ENCODE measurements at regions of chr1 and their contacts with region 1.

Region 1: GRCh38 chr1:175373786-175374623 is 181.4 kb upstream of the KIAA0040 start:
- DNase-seq: peak; percentile 16
- ATAC-seq: peak; percentile 97
- H3K4me3 ChIP-seq: no peak overlapping the region
- H3K27ac ChIP-seq: no peak overlapping the region
- H3K4me1 ChIP-seq: no peaks in the 10 kb centered on the region
- H3K27me3 ChIP-seq: no peaks in the 10 kb centered on the region
- CTCF ChIP-seq: peak; percentile 89
- EP300 ChIP-seq: no peak
- POLR2A ChIP-seq: no peak
- RAD21 ChIP-seq: peak; percentile 63

Region 2: DNA sequence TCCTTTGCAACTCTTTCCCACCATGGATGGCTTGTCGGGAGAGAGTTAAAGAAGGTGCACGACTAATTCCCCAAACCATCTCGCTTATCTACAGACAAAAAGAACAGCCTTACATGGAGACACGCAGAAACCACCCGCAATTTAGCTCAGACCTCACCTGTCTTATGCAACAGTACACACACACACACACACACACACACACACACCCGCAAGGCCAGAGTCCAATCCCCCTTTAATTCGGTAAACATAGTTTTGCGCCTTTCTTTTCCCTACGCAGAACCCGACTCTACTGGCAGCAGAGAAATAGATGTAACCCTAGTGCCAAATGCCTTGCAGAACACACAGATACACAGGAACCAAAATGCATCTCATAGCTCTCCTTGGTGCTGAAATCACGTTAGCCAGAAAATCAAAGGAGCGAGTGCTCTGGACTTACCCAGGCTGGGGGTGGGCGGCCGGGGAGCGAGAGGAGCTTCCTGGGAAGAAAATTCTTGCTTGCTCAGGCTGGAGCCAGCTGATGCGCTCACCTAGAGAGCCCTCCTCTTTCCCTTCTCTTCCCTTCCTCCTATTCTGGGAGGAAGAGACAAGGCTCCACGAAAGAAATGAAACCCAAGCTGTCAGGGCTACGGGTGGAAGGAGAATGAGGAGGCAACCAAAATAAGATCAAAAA is 368.9 kb after region 1 on chr1:
- CTCF ChIA-PET with region 1: no interaction called
- POLR2A ChIA-PET with region 1: no interaction called
- in situ Hi-C with region 1: no loop called
- intact Hi-C with region 1: loop called (anchors 10 kb)
- DNase-seq: peak; percentile 26
- ATAC-seq: peak; percentile 84
- H3K4me3 ChIP-seq: no peak overlapping the region
- H3K27ac ChIP-seq: no peak overlapping the region
- H3K4me1 ChIP-seq: peaks cover 10% of the 10 kb centered on the region; the same call in 1 of the 2 replicates
- H3K27me3 ChIP-seq: no peaks in the 10 kb centered on the region; a peak in 1 of 5 replicates
- CTCF ChIP-seq: no peak
- EP300 ChIP-seq: no peak
- POLR2A ChIP-seq: no peak
- RAD21 ChIP-seq: no peak

Region 3: GRCh38 chr1:175887981-175888433 is 514.0 kb after region 1 on chr1:
- CTCF ChIA-PET with region 1: no interaction called
- POLR2A ChIA-PET with region 1: no interaction called
- in situ Hi-C with region 1: no loop called
- intact Hi-C with region 1: loop called (anchors 5 kb)
- DNase-seq: peak; percentile 45
- ATAC-seq: peak; percentile 99
- H3K4me3 ChIP-seq: no peak overlapping the region
- H3K27ac ChIP-seq: no peak overlapping the region
- H3K4me1 ChIP-seq: no peaks in the 10 kb centered on the region
- H3K27me3 ChIP-seq: peaks cover 2 to 4% of the 10 kb centered on the region in 2 experiments; a peak in 1 of 5 replicates
- CTCF ChIP-seq: peak; percentile 85
- EP300 ChIP-seq: no peak
- POLR2A ChIP-seq: no peak
- RAD21 ChIP-seq: peak; percentile 68

Region 4: GRCh38 chr1:176073524-176074157 is 699.6 kb after region 1 on chr1:
- CTCF ChIA-PET with region 1: interaction called, 4 read pairs
- POLR2A ChIA-PET with region 1: no interaction called
- in situ Hi-C with region 1: loop called (anchors 25 kb)
- intact Hi-C with region 1: loop called (anchors 2 kb)
- DNase-seq: peak; percentile 57
- ATAC-seq: peak; percentile 80
- H3K4me3 ChIP-seq: no peak overlapping the region
- H3K27ac ChIP-seq: no peak overlapping the region
- H3K4me1 ChIP-seq: no peaks in the 10 kb centered on the region
- H3K27me3 ChIP-seq: no peaks in the 10 kb centered on the region
- CTCF ChIP-seq: peak; percentile 81
- EP300 ChIP-seq: no peak
- POLR2A ChIP-seq: no peak
- RAD21 ChIP-seq: peak; percentile 16; the same call in 1 of the 2 replicates

Region 5: DNA sequence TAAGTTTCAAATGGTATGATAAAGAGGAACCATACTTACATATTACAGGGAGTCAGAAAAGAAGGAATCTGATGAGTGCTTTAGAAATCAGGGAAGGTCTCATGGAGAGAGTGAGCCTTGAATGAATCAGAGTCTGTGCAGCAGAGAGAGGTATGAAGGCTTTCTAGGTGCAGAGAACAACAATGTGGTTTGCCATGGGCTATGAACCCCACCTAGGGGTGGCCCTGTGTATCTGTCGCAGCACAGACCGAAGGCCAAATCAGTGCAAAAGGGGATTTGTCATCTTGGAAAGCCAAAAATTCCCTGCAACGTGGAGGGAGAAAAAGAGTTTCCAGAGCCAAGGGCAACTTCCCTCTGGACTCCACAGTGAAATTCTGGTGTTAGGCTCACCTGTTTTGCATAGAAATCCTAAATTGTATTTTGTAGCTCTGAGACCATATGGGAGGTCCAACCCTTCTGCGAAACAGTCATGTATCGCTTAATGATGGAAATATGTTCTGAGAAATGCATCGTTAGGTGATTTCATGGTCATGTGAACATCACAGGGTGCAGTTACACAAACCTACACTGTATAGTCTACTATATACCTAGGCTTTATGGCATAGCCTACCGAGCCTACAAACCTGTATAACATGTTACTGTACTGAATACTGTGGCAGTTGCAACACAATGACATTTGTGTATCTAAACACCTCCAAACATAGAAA is 1092.7 kb after region 1 on chr1:
- CTCF ChIA-PET with region 1: no interaction called
- POLR2A ChIA-PET with region 1: no interaction called
- in situ Hi-C with region 1: loop called (anchors 25 kb)
- intact Hi-C with region 1: loop called (anchors 5 kb)
- DNase-seq: peak; percentile 19
- ATAC-seq: peak; percentile 98
- H3K4me3 ChIP-seq: no peak overlapping the region
- H3K27ac ChIP-seq: no peak overlapping the region
- H3K4me1 ChIP-seq: peaks cover 9% of the 10 kb centered on the region
- H3K27me3 ChIP-seq: no peaks in the 10 kb centered on the region
- CTCF ChIP-seq: peak; percentile 70
- EP300 ChIP-seq: no peak
- POLR2A ChIP-seq: no peak
- RAD21 ChIP-seq: no peak

Region 6: GRCh38 chr1:176691251-176692228 is 1317.5 kb after region 1 on chr1:
- CTCF ChIA-PET with region 1: no interaction called
- POLR2A ChIA-PET with region 1: no interaction called
- in situ Hi-C with region 1: no loop called
- intact Hi-C with region 1: loop called (anchors 5 kb)
- DNase-seq: peak; percentile 52
- ATAC-seq: peak; percentile 88
- H3K4me3 ChIP-seq: no peak overlapping the region
- H3K27ac ChIP-seq: no peak overlapping the region
- H3K4me1 ChIP-seq: no peaks in the 10 kb centered on the region
- H3K27me3 ChIP-seq: no peaks in the 10 kb centered on the region
- CTCF ChIP-seq: peak; percentile 84
- EP300 ChIP-seq: no peak
- POLR2A ChIP-seq: no peak
- RAD21 ChIP-seq: no peak

Measured in HepG2 (cell line).